ENCODE measurements at regions of chr11 and their contacts with region 1.

Region 1: GRCh38 chr11:15101072-15101709 is 13.5 kb upstream of the INSC start:
- DNase-seq: peak; percentile 61 to 67 (median 63)
- ATAC-seq: peak; percentile 93
- H3K4me3 ChIP-seq: no peak overlapping the region
- H3K27ac ChIP-seq: no peak overlapping the region
- H3K4me1 ChIP-seq: no peaks in the 10 kb centered on the region
- H3K27me3 ChIP-seq: no peaks in the 10 kb centered on the region
- CTCF ChIP-seq: peak; percentile 82 to 85 (median 83)
- EP300 ChIP-seq: no peak
- POLR2A ChIP-seq: no peak
- RAD21 ChIP-seq: peak; percentile 54 to 74

Region 2: GRCh38 chr11:15208378-15209222 is 107.4 kb after region 1 on chr11:
- CTCF ChIA-PET with region 1: interaction called, 22 read pairs
- POLR2A ChIA-PET with region 1: no interaction called
- in situ Hi-C with region 1: no loop called
- intact Hi-C with region 1: loop called (anchors 1 kb)
- DNase-seq: peak; percentile 74 to 86 (median 84)
- ATAC-seq: peak; percentile 99
- H3K4me3 ChIP-seq: no peak overlapping the region
- H3K27ac ChIP-seq: no peak overlapping the region
- H3K4me1 ChIP-seq: no peaks in the 10 kb centered on the region
- H3K27me3 ChIP-seq: no peaks in the 10 kb centered on the region; a peak in 1 of 5 replicates
- CTCF ChIP-seq: peak; percentile 83 to 88 (median 86)
- EP300 ChIP-seq: no peak
- POLR2A ChIP-seq: no peak
- RAD21 ChIP-seq: peak; percentile 83 to 87

Region 3: DNA sequence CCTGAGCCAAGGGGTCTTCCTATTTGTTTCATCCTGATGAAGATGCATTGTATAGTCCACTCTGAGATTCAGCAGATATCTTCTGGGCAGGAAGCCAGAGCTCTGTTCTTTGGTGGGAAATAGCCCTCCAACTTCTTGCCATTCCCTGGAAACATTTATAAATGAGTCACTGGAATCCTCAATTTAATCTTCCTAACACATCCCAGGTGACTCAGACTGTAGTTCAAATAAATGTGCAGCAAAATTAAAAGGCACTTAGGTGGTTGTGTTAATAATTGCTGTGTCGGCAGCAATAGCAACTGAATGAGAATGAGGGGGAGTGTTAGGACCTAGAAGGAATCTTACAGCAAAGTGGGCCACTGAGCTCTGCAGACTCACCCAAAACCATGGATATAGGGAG is 122.1 kb after region 1 on chr11:
- CTCF ChIA-PET with region 1: no interaction called
- POLR2A ChIA-PET with region 1: no interaction called
- in situ Hi-C with region 1: no loop called
- intact Hi-C with region 1: no loop called
- DNase-seq: no peak
- ATAC-seq: no peak
- H3K4me3 ChIP-seq: no peak overlapping the region
- H3K27ac ChIP-seq: no peak overlapping the region
- H3K4me1 ChIP-seq: no peaks in the 10 kb centered on the region
- H3K27me3 ChIP-seq: no peaks in the 10 kb centered on the region; a peak in 2 of 5 replicates
- CTCF ChIP-seq: no peak
- EP300 ChIP-seq: no peak
- POLR2A ChIP-seq: no peak
- RAD21 ChIP-seq: no peak

Measured in K562 (cell line).